Common myeloid progenitor, CD34-positive (primary cell): ENCODE measurements at regions of chr2 and their contacts with region 1.

Region 1: GRCh38 chr2:20454036-20454981 is 7.4 kb downstream of the RHOB start:
- DNase-seq: no peak
- H3K4me3 ChIP-seq: no peak overlapping the region
- H3K27ac ChIP-seq: no peak overlapping the region
- H3K4me1 ChIP-seq: no peaks in the 10 kb centered on the region
- H3K27me3 ChIP-seq: peaks cover 0 to 19% (median 2%) of the 10 kb centered on the region in 5 experiments

Region 2: DNA sequence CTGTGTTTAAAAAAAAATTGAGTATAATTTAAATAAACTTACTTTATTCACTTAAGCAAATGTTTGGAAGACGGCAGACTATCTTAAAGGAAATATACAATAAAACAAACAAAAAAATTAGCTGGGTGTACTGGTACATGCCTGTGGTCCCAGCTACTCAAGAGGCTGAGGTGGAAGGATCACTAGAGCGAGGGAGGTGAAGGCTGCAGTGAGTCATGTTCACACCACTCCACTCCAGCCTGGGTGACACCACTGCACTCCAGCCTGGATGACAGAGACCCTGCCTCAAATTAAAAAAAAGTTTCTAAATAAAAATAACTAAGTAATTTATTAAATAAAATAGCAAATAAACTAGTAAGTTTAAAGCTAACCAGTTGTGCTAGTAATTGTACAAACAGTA is 111.2 kb before region 1 on chr2:
- CTCF ChIA-PET with region 1: interaction called, 3 read pairs
- POLR2A ChIA-PET with region 1: interaction called, 10 read pairs
- DNase-seq: peak in 1 of 3 donors; percentile 36
- H3K4me3 ChIP-seq: no peak overlapping the region
- H3K27ac ChIP-seq: no peak overlapping the region
- H3K4me1 ChIP-seq: peaks cover 0 to 26% (median 15%) of the 10 kb centered on the region in 4 experiments
- H3K27me3 ChIP-seq: no peaks in the 10 kb centered on the region